Activated CD8-positive, alpha-beta memory T cell treated with anti-CD3 and anti-CD28 coated beads, Interleukin-2, amount 10 ng/mL, durations not matched to agents 7 days and 5 days (primary cell): ENCODE measurements at regions of chr17 and their contacts with region 1.

Region 1: GRCh38 chr17:63773381-63774140 is at the start of gene CCDC47:
- DNase-seq: peak; percentile 99
- ATAC-seq: peak; percentile 86
- H3K4me3 Mint-ChIP-seq: peak within 1 kb of the TSS; percentile 97
- H3K27ac Mint-ChIP-seq: peak within 1 kb of the TSS; percentile 99
- H3K4me1 Mint-ChIP-seq: peaks cover 50% of the 10 kb centered on the region
- H3K27me3 Mint-ChIP-seq: no peaks in the 10 kb centered on the region
- total RNA-seq, gene CCDC47: 55.7 to 71.1 TPM

Region 2: GRCh38 chr17:63697341-63698286 is 75.9 kb before region 1 on chr17:
- CTCF ChIA-PET with region 1: interaction called, 23 read pairs
- DNase-seq: peak; percentile 92
- ATAC-seq: peak; percentile 35
- H3K4me3 Mint-ChIP-seq: peak overlapping the region; percentile 84
- H3K27ac Mint-ChIP-seq: peak overlapping the region; percentile 94
- H3K4me1 Mint-ChIP-seq: peaks cover 48% of the 10 kb centered on the region
- H3K27me3 Mint-ChIP-seq: no peaks in the 10 kb centered on the region

Region 3: DNA sequence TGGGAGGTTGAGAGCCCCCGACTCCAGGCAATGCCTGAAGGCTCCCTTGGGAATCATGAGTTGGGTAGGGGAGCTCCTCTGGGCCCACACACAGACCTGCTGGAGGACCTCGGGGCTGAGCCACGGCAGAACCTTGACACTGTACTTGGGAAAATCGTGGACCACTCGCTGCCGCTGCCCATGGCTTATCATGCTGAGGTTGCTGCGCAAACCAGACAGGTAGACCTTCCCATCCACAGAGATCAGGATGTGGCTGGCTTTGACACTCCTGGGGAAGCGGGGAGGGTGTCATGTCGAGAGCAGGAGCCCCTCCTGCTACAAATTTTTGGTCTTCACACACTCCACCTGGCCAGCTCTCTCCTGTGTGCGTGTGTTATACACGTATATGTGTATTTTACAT is 66.4 kb before region 1 on chr17:
- CTCF ChIA-PET with region 1: interaction called, 20 read pairs
- DNase-seq: peak; percentile 41
- ATAC-seq: peak; percentile 2
- H3K4me3 Mint-ChIP-seq: no peak overlapping the region
- H3K27ac Mint-ChIP-seq: peak overlapping the region; percentile 71
- H3K4me1 Mint-ChIP-seq: peaks cover 69% of the 10 kb centered on the region
- H3K27me3 Mint-ChIP-seq: no peaks in the 10 kb centered on the region

Region 4: GRCh38 chr17:63741221-63742049 is 32.1 kb before region 1 on chr17 and contains the start of gene STRADA:
- CTCF ChIA-PET with region 1: interaction called, 10 read pairs
- DNase-seq: peak; percentile 100
- ATAC-seq: peak; percentile 95
- H3K4me3 Mint-ChIP-seq: peak within 1 kb of the TSS; percentile 94
- H3K27ac Mint-ChIP-seq: peak within 1 kb of the TSS; percentile 89
- H3K4me1 Mint-ChIP-seq: peaks cover 26% of the 10 kb centered on the region
- H3K27me3 Mint-ChIP-seq: no peaks in the 10 kb centered on the region
- total RNA-seq, gene STRADA: 59.9 to 76.8 TPM

Region 5: GRCh38 chr17:63760771-63761539 is 12.6 kb before region 1 on chr17:
- CTCF ChIA-PET with region 1: interaction called, 15 read pairs
- DNase-seq: no peak
- ATAC-seq: peak; percentile 57
- H3K4me3 Mint-ChIP-seq: no peak overlapping the region
- H3K27ac Mint-ChIP-seq: peak overlapping the region; percentile 61
- H3K4me1 Mint-ChIP-seq: peaks cover 20% of the 10 kb centered on the region
- H3K27me3 Mint-ChIP-seq: no peaks in the 10 kb centered on the region

Region 6: GRCh38 chr17:63827002-63827771 is 53.6 kb after region 1 on chr17 and contains the starts of genes FTSJ3 and PSMC5:
- CTCF ChIA-PET with region 1: interaction called, 10 read pairs
- DNase-seq: peak; percentile 97
- ATAC-seq: peak; percentile 91
- H3K4me3 Mint-ChIP-seq: peak within 1 kb of the TSS; percentile 99
- H3K27ac Mint-ChIP-seq: peak within 1 kb of the TSS; percentile 97
- H3K4me1 Mint-ChIP-seq: peaks cover 79% of the 10 kb centered on the region
- H3K27me3 Mint-ChIP-seq: no peaks in the 10 kb centered on the region
- total RNA-seq, gene FTSJ3: 58.9 to 71.7 TPM
- total RNA-seq, gene PSMC5: 157 to 195 TPM

Region 7: DNA sequence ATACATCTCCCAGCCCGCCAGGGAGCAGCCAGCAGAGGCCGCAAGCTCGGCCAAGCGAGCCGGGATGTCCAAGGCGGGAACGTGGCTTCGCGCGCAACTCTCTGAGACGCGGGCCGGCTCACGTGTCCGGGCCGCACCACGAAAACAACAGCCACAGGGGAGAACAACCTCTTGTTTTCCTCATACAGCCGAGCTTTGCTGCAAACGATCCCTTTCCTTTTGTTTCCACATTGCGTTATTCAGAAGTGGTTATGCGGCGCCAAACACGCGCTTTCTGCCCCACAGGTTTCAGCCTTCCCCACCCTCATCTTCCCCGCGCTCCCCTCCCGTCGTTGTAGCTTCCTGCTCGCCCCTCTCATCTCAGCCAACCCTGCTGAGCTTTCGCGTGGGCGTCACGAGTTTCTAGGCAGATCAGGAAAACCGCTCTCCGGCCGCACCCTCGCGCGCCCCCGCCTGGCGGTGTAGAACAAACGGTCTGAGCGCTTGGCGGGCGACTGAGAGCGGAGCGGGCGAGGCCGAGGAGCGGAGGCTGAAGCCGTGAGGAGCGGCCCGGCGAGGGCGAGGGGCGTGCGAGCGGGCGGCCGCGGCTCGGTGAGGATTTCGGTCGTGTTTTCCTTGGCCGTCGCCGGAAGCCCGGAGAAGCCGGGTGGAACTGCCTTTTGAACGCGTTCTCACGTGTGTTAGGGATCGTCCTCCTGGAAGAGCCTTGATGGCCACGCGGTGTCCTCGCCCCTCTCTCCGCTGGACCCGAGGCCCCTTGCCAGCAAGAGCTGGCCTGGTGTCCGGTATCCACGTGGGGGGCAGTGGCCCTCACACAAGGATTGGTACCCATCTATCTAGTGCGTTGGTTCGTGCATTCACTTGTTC is 75.5 kb after region 1 on chr17:
- CTCF ChIA-PET with region 1: interaction called, 13 read pairs
- DNase-seq: peak; percentile 96
- ATAC-seq: peak; percentile 97
- H3K4me3 Mint-ChIP-seq: peak overlapping the region; percentile 59
- H3K27ac Mint-ChIP-seq: peak overlapping the region; percentile 88
- H3K4me1 Mint-ChIP-seq: peaks cover 24% of the 10 kb centered on the region
- H3K27me3 Mint-ChIP-seq: peaks cover 11% of the 10 kb centered on the region